Caco-2 (cell line): ENCODE measurements at regions of chr10 and their contacts with region 1.

Region 1: DNA sequence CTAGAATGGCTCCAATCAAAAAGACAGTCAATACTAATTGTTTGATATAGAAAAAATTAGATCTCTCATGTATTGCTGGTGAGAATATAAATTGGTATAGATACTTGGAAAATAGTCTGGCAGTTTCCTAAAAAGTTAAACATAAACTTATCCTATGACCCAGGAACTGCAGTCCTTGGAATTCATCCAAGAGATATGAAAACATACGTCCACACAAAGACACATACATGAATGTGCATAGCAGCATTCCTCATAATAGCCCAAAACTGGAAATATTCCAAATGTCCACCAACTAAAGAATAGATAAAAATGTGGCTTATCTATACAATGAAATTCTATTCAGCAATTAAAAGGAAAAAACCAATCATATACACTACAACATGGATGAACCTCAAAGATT is 128.4 kb downstream of the ZFAND4 start:
- DNase-seq: no peak
- H3K4me3 ChIP-seq: no peak overlapping the region
- H3K4me3 Mint-ChIP-seq: no peak overlapping the region
- H3K27ac Mint-ChIP-seq: no peak overlapping the region
- H3K4me1 ChIP-seq: no peaks in the 10 kb centered on the region
- H3K4me1 Mint-ChIP-seq: no peaks in the 10 kb centered on the region
- H3K27me3 ChIP-seq: no peaks in the 10 kb centered on the region
- H3K27me3 Mint-ChIP-seq: no peaks in the 10 kb centered on the region
- CTCF ChIP-seq: no peak

Region 2: DNA sequence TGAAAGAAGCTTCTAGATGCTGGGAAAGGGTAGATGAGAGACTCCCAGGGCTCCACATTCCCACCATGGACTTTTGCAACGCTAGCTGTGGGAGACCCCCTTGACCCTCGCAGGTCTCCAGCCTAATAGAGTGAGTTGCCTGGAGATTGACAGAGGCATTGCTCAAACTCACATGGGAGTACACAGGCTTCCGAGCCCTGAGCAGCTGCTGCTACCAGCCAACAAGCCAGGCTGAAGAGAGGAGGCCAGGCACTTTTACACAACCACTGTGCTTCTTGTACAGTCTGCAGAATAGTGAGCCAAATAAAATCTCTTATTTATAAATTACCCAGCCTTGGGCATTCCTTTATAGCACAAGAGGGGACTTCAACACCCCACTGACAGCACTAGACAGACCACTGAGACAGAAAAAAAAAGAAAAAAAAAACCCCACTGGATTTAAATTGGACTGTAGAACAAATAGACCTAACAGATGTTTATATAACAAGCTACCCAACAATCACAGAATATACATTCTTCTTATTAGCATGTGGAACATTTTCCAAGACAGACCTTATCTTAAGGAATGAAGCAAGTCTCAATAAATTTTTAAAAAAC is 17.8 kb before region 1 on chr10:
- CTCF ChIA-PET with region 1: no interaction called
- POLR2A ChIA-PET with region 1: no interaction called
- intact Hi-C with region 1: loop called (anchors 2 kb)
- DNase-seq: no peak
- H3K4me3 ChIP-seq: no peak overlapping the region
- H3K4me3 Mint-ChIP-seq: no peak overlapping the region
- H3K27ac Mint-ChIP-seq: no peak overlapping the region
- H3K4me1 ChIP-seq: no peaks in the 10 kb centered on the region
- H3K4me1 Mint-ChIP-seq: no peaks in the 10 kb centered on the region
- H3K27me3 ChIP-seq: no peaks in the 10 kb centered on the region
- H3K27me3 Mint-ChIP-seq: peaks cover 21% of the 10 kb centered on the region
- CTCF ChIP-seq: no peak